Activated CD4-positive, alpha-beta T cell treated with anti-CD3 and anti-CD28 coated beads for 36 hours (primary cell): ENCODE measurements at regions of chr4 and their contacts with region 1.

Region 1: GRCh38 chr4:88823058-88823919 is 125.7 kb upstream of the NAP1L5 start:
- DNase-seq: peak; percentile 83
- ATAC-seq: peak; percentile 96
- H3K4me3 Mint-ChIP-seq: peak overlapping the region; percentile 77
- H3K27ac Mint-ChIP-seq: peak overlapping the region; percentile 88
- H3K4me1 Mint-ChIP-seq: peaks cover 38% of the 10 kb centered on the region
- H3K27me3 Mint-ChIP-seq: no peaks in the 10 kb centered on the region

Region 2: GRCh38 chr4:88378691-88379559 is 444.4 kb before region 1 on chr4 and contains the start of gene HERC6:
- CTCF ChIA-PET with region 1: no interaction called
- POLR2A ChIA-PET with region 1: no interaction called
- intact Hi-C with region 1: loop called in 1 of 2 experiments (anchors 5 kb)
- DNase-seq: peak; percentile 88
- ATAC-seq: peak; percentile 47
- H3K4me3 Mint-ChIP-seq: peak within 1 kb of the TSS; percentile 75
- H3K27ac Mint-ChIP-seq: peak within 1 kb of the TSS; percentile 84
- H3K4me1 Mint-ChIP-seq: peaks cover 39% of the 10 kb centered on the region
- H3K27me3 Mint-ChIP-seq: no peaks in the 10 kb centered on the region
- total RNA-seq, gene HERC6: 7.3 to 9.3 TPM

Region 3: DNA sequence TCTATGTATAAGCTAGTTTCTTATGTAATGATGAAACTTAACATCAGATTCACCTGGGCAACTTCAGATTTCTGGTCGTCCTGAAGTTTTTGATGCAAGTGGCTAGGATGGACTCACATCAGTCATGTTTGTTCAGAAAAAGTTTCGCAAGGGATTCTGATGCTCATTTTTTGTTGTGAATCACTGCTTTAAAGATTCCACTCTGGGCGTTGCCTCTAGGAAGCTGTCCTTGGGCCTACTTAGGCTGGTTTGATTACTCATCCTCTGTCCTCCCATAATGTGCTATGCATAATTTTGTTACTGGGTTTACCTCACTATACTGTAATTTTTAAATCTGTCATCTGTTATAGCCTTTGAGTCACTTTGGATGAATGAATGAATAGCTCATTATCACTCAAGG is 200.2 kb before region 1 on chr4:
- CTCF ChIA-PET with region 1: no interaction called
- POLR2A ChIA-PET with region 1: no interaction called
- intact Hi-C with region 1: no loop called
- DNase-seq: no peak
- ATAC-seq: peak; percentile 79
- H3K4me3 Mint-ChIP-seq: no peak overlapping the region
- H3K27ac Mint-ChIP-seq: no peak overlapping the region
- H3K4me1 Mint-ChIP-seq: peaks cover 31% of the 10 kb centered on the region
- H3K27me3 Mint-ChIP-seq: no peaks in the 10 kb centered on the region

Region 4: DNA sequence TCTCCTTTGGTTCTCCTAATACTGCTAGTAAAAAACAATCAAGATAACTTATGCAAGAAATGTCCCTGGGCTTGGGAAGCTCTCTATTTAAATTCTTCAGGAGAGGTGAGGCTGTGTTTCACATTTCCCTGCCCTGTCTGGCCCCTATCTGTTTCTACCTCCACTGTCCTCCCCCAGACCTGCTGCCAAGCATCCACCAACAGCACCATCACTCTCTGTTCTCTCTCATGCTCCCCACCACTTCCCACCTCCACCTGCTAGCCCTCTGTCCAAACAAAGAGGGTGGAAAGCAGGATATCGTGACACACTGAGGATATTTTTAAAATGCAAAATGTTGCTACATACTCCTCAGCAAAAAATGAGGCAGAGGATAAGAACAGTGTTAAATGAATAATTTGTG is 37.3 kb before region 1 on chr4:
- CTCF ChIA-PET with region 1: no interaction called
- POLR2A ChIA-PET with region 1: no interaction called
- intact Hi-C with region 1: no loop called
- DNase-seq: no peak
- ATAC-seq: no peak
- H3K4me3 Mint-ChIP-seq: no peak overlapping the region
- H3K27ac Mint-ChIP-seq: no peak overlapping the region
- H3K4me1 Mint-ChIP-seq: no peaks in the 10 kb centered on the region
- H3K27me3 Mint-ChIP-seq: no peaks in the 10 kb centered on the region

Region 5: DNA sequence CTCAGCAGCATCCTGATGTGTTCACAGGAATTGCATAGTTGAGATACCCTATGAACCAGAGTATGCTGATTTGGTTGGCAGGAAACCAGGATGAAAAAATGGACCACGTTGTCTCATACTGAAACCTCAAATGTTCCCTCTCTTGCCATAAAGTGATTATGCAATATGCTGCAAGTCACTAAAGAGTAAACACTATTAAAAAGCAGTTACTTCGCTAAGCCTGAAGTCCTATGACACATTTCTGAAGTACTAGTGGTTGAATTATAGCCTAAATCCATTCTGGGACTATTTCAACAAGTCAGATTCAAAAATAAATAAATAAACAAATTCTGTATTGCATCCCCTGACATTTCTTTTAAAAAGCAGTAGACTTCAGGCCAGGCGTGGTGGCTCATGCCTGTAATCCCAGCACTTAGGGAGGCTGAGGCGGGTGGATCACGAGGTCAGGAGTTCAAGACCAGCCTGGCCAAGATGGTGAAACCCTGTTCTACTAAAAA is 19.6 kb before region 1 on chr4:
- CTCF ChIA-PET with region 1: interaction called, 3 read pairs
- POLR2A ChIA-PET with region 1: no interaction called
- intact Hi-C with region 1: loop called in 1 of 2 experiments (anchors 1 kb)
- DNase-seq: peak; percentile 35
- ATAC-seq: peak; percentile 63
- H3K4me3 Mint-ChIP-seq: no peak overlapping the region
- H3K27ac Mint-ChIP-seq: no peak overlapping the region
- H3K4me1 Mint-ChIP-seq: peaks cover 14% of the 10 kb centered on the region
- H3K27me3 Mint-ChIP-seq: peaks cover 5% of the 10 kb centered on the region

Region 6: GRCh38 chr4:89024051-89024675 is 200.9 kb after region 1 on chr4:
- CTCF ChIA-PET with region 1: interaction called, 106 read pairs
- POLR2A ChIA-PET with region 1: no interaction called
- intact Hi-C with region 1: loop called (anchors 1 kb)
- DNase-seq: peak; percentile 58
- ATAC-seq: peak; percentile 91
- H3K4me3 Mint-ChIP-seq: no peak overlapping the region
- H3K27ac Mint-ChIP-seq: no peak overlapping the region
- H3K4me1 Mint-ChIP-seq: peaks cover 4% of the 10 kb centered on the region
- H3K27me3 Mint-ChIP-seq: peaks cover 2% of the 10 kb centered on the region

Region 7: GRCh38 chr4:89158884-89159503 is 335.7 kb after region 1 on chr4:
- CTCF ChIA-PET with region 1: no interaction called
- POLR2A ChIA-PET with region 1: no interaction called
- intact Hi-C with region 1: loop called in 1 of 2 experiments (anchors 5 kb)
- DNase-seq: no peak
- ATAC-seq: no peak
- H3K4me3 Mint-ChIP-seq: no peak overlapping the region
- H3K27ac Mint-ChIP-seq: no peak overlapping the region
- H3K4me1 Mint-ChIP-seq: no peaks in the 10 kb centered on the region
- H3K27me3 Mint-ChIP-seq: peaks cover 5% of the 10 kb centered on the region

Region 8: GRCh38 chr4:89549907-89550306 is 726.6 kb after region 1 on chr4:
- CTCF ChIA-PET with region 1: no interaction called
- POLR2A ChIA-PET with region 1: no interaction called
- intact Hi-C with region 1: no loop called
- DNase-seq: no peak
- ATAC-seq: no peak
- H3K4me3 Mint-ChIP-seq: no peak overlapping the region
- H3K27ac Mint-ChIP-seq: no peak overlapping the region
- H3K4me1 Mint-ChIP-seq: no peaks in the 10 kb centered on the region
- H3K27me3 Mint-ChIP-seq: peaks cover 4% of the 10 kb centered on the region